K562 (cell line): ENCODE measurements at regions of chr17 and their contacts with region 1.

Region 1: GRCh38 chr17:32370426-32370825 is 20.5 kb downstream of the ZNF207 start:
- DNase-seq: no peak
- ATAC-seq: no peak
- H3K4me3 ChIP-seq: no peak overlapping the region
- H3K27ac ChIP-seq: no peak overlapping the region
- H3K4me1 ChIP-seq: no peaks in the 10 kb centered on the region
- H3K27me3 ChIP-seq: no peaks in the 10 kb centered on the region
- CTCF ChIP-seq: no peak
- EP300 ChIP-seq: no peak
- POLR2A ChIP-seq: no peak
- RAD21 ChIP-seq: no peak

Region 2: DNA sequence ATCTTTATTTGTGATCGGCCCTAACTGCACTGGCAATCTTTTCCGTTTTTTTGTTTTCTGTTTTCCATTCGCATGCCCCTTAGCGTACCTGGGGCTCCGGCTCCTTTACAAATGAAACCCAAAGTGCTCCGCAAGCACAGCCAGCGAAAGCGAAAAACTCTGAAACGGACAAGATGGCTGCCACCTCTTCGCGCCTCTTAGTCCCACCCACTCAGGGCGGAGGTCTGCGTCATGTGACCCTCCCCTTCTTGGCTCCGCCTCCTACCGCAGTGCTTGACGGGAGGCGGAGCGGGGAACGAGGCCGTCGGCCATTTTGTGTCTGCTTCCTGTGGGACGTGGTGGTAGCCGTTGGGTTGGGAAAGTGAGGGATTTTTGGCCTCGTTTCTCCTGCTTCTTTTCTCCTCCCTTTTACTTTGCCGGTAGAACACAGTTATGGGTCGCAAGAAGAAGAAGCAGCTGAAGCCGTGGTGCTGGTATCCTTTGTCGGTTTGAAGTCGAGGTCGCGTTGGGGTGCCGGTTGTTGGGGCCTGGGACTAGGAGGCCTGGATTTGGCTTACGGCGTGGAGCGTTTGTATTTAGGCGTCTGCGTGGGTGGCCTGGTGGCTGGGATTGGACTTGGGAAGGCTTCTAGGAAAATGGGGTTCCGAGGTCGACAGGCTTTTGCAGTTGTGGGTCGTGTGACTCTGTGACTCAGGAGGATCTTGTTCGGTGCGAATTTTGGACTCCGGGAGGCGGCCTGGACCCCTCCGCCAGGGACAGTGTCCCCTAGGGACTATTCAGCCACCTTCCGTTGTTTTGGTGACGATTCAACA is 20.4 kb before region 1 on chr17 and contains the start of gene ZNF207:
- CTCF ChIA-PET with region 1: no interaction called
- POLR2A ChIA-PET with region 1: interaction called, 17 read pairs
- in situ Hi-C with region 1: no loop called
- intact Hi-C with region 1: no loop called
- DNase-seq: peak; percentile 89 to 98 (median 91)
- ATAC-seq: peak; percentile 87
- H3K4me3 ChIP-seq: peak within 1 kb of the TSS; percentile 74
- H3K27ac ChIP-seq: peak within 1 kb of the TSS; percentile 99
- H3K4me1 ChIP-seq: peaks cover 31 to 37% of the 10 kb centered on the region in 2 experiments; a peak in 4 of 5 replicates
- H3K27me3 ChIP-seq: no peaks in the 10 kb centered on the region
- CTCF ChIP-seq: no peak
- EP300 ChIP-seq: no peak
- POLR2A ChIP-seq: peak; percentile 99
- RAD21 ChIP-seq: no peak
- polyA plus RNA-seq, gene ZNF207: 191 to 245 TPM

Region 3: DNA sequence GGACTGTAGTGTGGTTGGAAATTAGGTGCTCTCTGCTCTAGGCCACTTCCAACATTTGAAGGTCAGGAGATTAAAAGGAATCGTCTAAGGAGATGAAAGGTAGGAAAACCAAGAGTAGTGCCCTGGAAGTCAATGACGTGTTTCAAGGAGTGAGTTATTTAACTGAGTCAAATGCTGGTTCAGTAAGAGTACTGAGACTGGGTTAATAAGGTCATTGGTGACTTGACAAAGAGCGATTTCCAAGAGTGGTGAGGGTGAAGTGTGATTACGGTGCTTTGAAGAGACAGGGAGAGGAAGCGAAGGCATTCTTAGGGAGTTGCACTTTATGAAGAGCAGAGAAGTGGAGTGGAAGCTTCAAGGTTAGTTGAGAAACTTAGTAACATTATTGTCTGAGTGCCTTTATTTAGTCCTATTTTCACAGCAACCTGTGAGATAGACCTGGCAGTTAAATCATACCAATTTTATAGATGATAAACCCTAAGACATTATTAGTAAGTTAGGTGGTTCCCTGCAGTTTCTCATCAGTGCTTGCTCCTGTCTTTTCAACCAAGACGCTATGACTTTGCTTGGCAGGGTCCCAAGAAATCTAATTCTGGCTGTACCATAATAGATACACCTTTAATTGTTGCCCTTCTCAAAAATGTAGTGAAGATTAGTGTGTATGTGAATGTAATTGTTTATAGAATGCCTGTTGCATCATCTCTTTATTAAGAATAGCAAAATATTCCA is 14.6 kb before region 1 on chr17:
- CTCF ChIA-PET with region 1: no interaction called
- POLR2A ChIA-PET with region 1: interaction called, 27 read pairs
- in situ Hi-C with region 1: no loop called
- intact Hi-C with region 1: no loop called
- DNase-seq: no peak
- ATAC-seq: peak; percentile 18
- H3K4me3 ChIP-seq: no peak overlapping the region; the same call in 1 of the 2 replicates
- H3K27ac ChIP-seq: peak overlapping the region; percentile 41
- H3K4me1 ChIP-seq: peaks cover 16 to 18% of the 10 kb centered on the region in 2 experiments; a peak in 4 of 5 replicates
- H3K27me3 ChIP-seq: no peaks in the 10 kb centered on the region
- CTCF ChIP-seq: no peak
- EP300 ChIP-seq: no peak
- POLR2A ChIP-seq: no peak; the same call in 1 of the 2 replicates
- RAD21 ChIP-seq: no peak

Region 4: GRCh38 chr17:32444308-32445073 is 74.1 kb after region 1 on chr17 and contains the start of gene PSMD11:
- CTCF ChIA-PET with region 1: interaction called, 4 read pairs
- POLR2A ChIA-PET with region 1: interaction called, 4 read pairs
- in situ Hi-C with region 1: no loop called
- intact Hi-C with region 1: loop called (anchors 10 kb)
- DNase-seq: peak; percentile 96 to 98 (median 98)
- ATAC-seq: peak; percentile 96
- H3K4me3 ChIP-seq: peak within 1 kb of the TSS; percentile 99
- H3K27ac ChIP-seq: peak within 1 kb of the TSS; percentile 95
- H3K4me1 ChIP-seq: peaks cover 11 to 17% of the 10 kb centered on the region in 2 experiments; a peak in 4 of 5 replicates
- H3K27me3 ChIP-seq: no peaks in the 10 kb centered on the region
- CTCF ChIP-seq: peak in 2 of 3 experiments; percentile 91 to 96; a peak in 3 of 6 replicates
- EP300 ChIP-seq: 0 out of 2 replicates have a peak, but pooled peaks have one; percentile 1
- POLR2A ChIP-seq: peak; percentile 88
- RAD21 ChIP-seq: peak; percentile 22 to 50; a peak in 2 of 4 replicates
- polyA plus RNA-seq, gene PSMD11: 316 to 378 TPM

Region 5: GRCh38 chr17:32461853-32462617 is 91.6 kb after region 1 on chr17:
- CTCF ChIA-PET with region 1: no interaction called
- POLR2A ChIA-PET with region 1: no interaction called
- in situ Hi-C with region 1: no loop called
- intact Hi-C with region 1: no loop called
- DNase-seq: peak; percentile 40 to 72 (median 44)
- ATAC-seq: peak; percentile 92
- H3K4me3 ChIP-seq: no peak overlapping the region
- H3K27ac ChIP-seq: 0 out of 3 replicates have a peak overlapping the region, but pooled peaks have one; percentile 40
- H3K4me1 ChIP-seq: peaks cover 0 to 2% of the 10 kb centered on the region in 2 experiments; a peak in 1 of 5 replicates
- H3K27me3 ChIP-seq: no peaks in the 10 kb centered on the region
- CTCF ChIP-seq: peak; percentile 63 to 75 (median 70)
- EP300 ChIP-seq: no peak
- POLR2A ChIP-seq: no peak
- RAD21 ChIP-seq: peak in 1 of 2 experiments; percentile 31; a peak in 1 of 4 replicates